HepG2 (cell line): ENCODE measurements at regions of chr16 and their contacts with region 1.

Region 1: GRCh38 chr16:24499193-24499814 is 40.1 kb upstream of the RBBP6 start:
- DNase-seq: peak; percentile 21
- ATAC-seq: peak; percentile 80
- H3K4me3 ChIP-seq: no peak overlapping the region
- H3K27ac ChIP-seq: no peak overlapping the region
- H3K4me1 ChIP-seq: 0 out of 2 replicates have a peak, but pooled peaks cover under 1% of the 10 kb centered on the region
- H3K27me3 ChIP-seq: peaks cover 0 to 11% of the 10 kb centered on the region in 2 experiments; a peak in 1 of 5 replicates
- CTCF ChIP-seq: peak; percentile 82
- EP300 ChIP-seq: no peak
- POLR2A ChIP-seq: no peak
- RAD21 ChIP-seq: peak; percentile 57; the same call in 1 of the 2 replicates

Region 2: GRCh38 chr16:24309222-24309905 is 189.9 kb before region 1 on chr16:
- CTCF ChIA-PET with region 1: no interaction called
- POLR2A ChIA-PET with region 1: no interaction called
- in situ Hi-C with region 1: no loop called
- intact Hi-C with region 1: loop called (anchors 2 kb)
- DNase-seq: peak; percentile 50
- ATAC-seq: no peak; the same call in 2 of the 3 replicates
- H3K4me3 ChIP-seq: no peak overlapping the region
- H3K27ac ChIP-seq: no peak overlapping the region
- H3K4me1 ChIP-seq: no peaks in the 10 kb centered on the region
- H3K27me3 ChIP-seq: peaks cover 1 to 15% of the 10 kb centered on the region in 2 experiments; a peak in 2 of 5 replicates
- CTCF ChIP-seq: no peak
- EP300 ChIP-seq: no peak
- POLR2A ChIP-seq: no peak
- RAD21 ChIP-seq: no peak

Region 3: DNA sequence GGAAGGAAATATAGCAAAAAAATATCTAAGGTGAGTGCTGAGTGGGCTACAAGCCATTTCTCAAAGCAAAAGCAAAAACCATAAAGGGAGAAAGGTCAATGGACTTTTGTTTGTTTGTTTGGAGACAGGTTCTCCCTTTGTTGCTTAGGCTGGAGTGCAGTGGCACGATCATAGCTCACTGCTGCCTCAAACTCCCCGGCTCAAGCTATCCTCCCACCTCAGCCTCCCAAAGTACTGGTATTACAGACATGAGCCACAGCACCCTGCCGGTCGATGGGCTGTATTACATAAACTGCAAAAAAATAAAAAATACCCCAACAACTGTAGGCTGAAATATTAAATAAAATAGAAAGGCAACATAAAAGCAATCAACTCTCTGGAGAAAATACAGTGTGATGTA is 36.5 kb after region 1 on chr16:
- CTCF ChIA-PET with region 1: no interaction called
- POLR2A ChIA-PET with region 1: no interaction called
- in situ Hi-C with region 1: no loop called
- intact Hi-C with region 1: no loop called
- DNase-seq: peak; percentile 39
- ATAC-seq: no peak
- H3K4me3 ChIP-seq: no peak overlapping the region
- H3K27ac ChIP-seq: no peak overlapping the region
- H3K4me1 ChIP-seq: peaks cover 67% of the 10 kb centered on the region
- H3K27me3 ChIP-seq: no peaks in the 10 kb centered on the region; a peak in 1 of 5 replicates
- CTCF ChIP-seq: 0 out of 2 replicates have a peak, but pooled peaks have one; percentile 13
- EP300 ChIP-seq: no peak
- POLR2A ChIP-seq: no peak
- RAD21 ChIP-seq: no peak